ENCODE measurements at regions of chr19 and their contacts with region 1.

Region 1: GRCh38 chr19:4791170-4792018 is at the start of gene FEM1A:
- DNase-seq: peak; percentile 100
- ATAC-seq: peak; percentile 92
- H3K4me3 ChIP-seq: peak within 1 kb of the TSS; percentile 95
- H3K27ac ChIP-seq: peak within 1 kb of the TSS; percentile 81
- H3K4me1 ChIP-seq: peaks cover 29% of the 10 kb centered on the region
- H3K27me3 ChIP-seq: no peaks in the 10 kb centered on the region
- CTCF ChIP-seq: peak; percentile 99
- total RNA-seq, gene FEM1A: 28.1 and 30.6 TPM in 2 replicates

Region 2: GRCh38 chr19:4471403-4472173 is 319.8 kb before region 1 on chr19:
- CTCF ChIA-PET with region 1: interaction called, 14 read pairs
- POLR2A ChIA-PET with region 1: no interaction called
- intact Hi-C with region 1: no loop called
- DNase-seq: peak; percentile 100
- ATAC-seq: peak; percentile 89
- H3K4me3 ChIP-seq: peak overlapping the region; percentile 98
- H3K27ac ChIP-seq: peak overlapping the region; percentile 49
- H3K4me1 ChIP-seq: peaks cover 13% of the 10 kb centered on the region; the same call in 1 of the 2 replicates
- H3K27me3 ChIP-seq: no peaks in the 10 kb centered on the region
- CTCF ChIP-seq: no peak

Region 3: GRCh38 chr19:4676955-4677731 is 114.3 kb before region 1 on chr19:
- CTCF ChIA-PET with region 1: no interaction called
- POLR2A ChIA-PET with region 1: no interaction called
- intact Hi-C with region 1: no loop called
- DNase-seq: peak; percentile 53
- ATAC-seq: peak; percentile 19; the same call in 1 of the 2 replicates
- H3K4me3 ChIP-seq: no peak overlapping the region
- H3K27ac ChIP-seq: no peak overlapping the region
- H3K4me1 ChIP-seq: no peaks in the 10 kb centered on the region
- H3K27me3 ChIP-seq: no peaks in the 10 kb centered on the region
- CTCF ChIP-seq: peak; percentile 75

Region 4: DNA sequence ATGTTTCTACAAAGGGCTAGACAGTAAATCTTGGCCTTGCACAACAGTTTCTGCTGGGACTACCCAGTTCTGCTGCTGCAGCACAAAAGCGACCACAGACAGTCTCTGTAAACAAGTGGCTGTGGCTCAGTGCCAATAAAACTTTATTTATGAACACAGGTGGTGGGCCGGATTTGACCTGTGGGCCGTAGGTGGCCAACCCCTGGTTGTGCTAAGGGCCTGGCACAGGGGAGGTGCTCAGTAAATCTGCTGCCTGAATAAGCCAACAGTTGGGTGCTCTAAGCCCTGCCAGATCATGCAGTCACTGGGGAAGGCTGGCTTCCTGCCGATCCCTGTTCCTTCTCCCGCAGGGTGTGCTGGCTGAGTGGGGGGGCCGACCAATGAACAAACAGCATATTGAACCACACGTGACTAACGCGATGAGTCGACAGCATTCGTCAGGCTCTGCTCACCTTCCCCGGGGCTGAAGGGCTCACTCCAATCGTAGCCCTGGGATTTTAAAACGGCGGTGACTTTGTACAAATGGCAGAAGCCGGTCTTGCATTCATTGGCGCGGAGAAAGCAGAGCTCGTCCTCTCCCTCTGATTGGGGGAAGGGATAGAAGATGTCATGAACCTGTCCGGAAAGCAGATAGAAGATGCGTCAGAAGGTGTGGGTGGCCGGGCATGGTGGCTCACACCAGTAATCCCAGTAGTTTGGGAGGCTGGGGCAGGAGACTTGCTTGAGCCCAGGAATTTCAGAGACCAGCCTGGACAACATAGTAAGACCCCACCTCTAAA is 97.0 kb before region 1 on chr19:
- CTCF ChIA-PET with region 1: interaction called, 6 read pairs
- POLR2A ChIA-PET with region 1: no interaction called
- intact Hi-C with region 1: loop called (anchors 1 kb)
- DNase-seq: peak; percentile 100
- ATAC-seq: peak; percentile 85
- H3K4me3 ChIP-seq: peak overlapping the region; percentile 1; the same call in 1 of the 2 replicates
- H3K27ac ChIP-seq: peak overlapping the region; percentile 90
- H3K4me1 ChIP-seq: peaks cover 40% of the 10 kb centered on the region
- H3K27me3 ChIP-seq: no peaks in the 10 kb centered on the region
- CTCF ChIP-seq: no peak

Region 5: DNA sequence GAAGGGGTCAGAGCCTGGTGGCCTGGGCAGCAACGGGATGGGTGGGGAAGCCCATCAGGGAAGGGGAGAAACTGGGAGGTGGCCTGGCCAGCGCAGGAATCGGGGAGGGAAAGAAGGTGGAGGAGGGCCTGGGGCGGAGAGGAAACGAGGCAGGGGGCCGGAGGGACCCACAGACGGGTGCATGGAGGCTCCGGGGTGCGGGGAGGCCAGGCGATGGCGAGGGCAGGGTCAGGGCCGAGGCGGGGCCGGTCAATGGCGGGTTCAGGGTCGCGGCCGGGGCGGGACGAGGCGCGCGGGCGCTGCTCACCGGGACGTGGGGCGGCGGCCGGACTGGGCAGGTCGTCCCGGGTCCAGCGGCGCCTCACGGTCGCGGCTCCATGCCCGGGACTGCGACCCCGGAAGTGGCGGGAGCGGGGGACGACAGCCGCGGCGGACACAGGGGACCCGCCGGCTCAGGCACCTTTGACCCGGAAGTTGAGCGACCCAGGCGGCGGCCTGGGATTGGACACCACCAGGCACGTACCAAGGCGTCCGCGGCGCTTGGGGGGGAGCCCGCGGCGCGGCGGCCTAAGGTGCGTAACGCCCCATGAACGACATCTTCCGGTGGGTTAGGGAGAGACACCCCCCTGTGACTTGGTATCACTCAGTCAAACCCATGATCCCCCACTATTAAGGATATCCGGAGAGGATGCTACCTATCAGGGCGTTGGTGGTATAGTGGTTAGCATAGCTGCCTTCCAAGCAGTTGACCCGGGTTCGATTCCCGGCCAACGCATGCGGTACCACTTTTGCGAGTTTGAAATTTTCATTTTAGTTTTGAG is 67.8 kb before region 1 on chr19 and contains the start of gene DPP9:
- CTCF ChIA-PET with region 1: interaction called, 8 read pairs
- POLR2A ChIA-PET with region 1: no interaction called
- intact Hi-C with region 1: loop called (anchors 1 kb)
- DNase-seq: peak; percentile 100
- ATAC-seq: peak; percentile 87
- H3K4me3 ChIP-seq: peak within 1 kb of the TSS; percentile 99
- H3K27ac ChIP-seq: peak within 1 kb of the TSS; percentile 76
- H3K4me1 ChIP-seq: peaks cover 18% of the 10 kb centered on the region
- H3K27me3 ChIP-seq: no peaks in the 10 kb centered on the region
- CTCF ChIP-seq: peak; percentile 35; the same call in 1 of the 2 replicates
- total RNA-seq, gene DPP9: 129 and 215 TPM in 2 replicates

Region 6: GRCh38 chr19:4759388-4760284 is 31.8 kb before region 1 on chr19:
- CTCF ChIA-PET with region 1: no interaction called
- POLR2A ChIA-PET with region 1: interaction called, 26 read pairs
- intact Hi-C with region 1: no loop called
- DNase-seq: peak; percentile 79
- ATAC-seq: peak; percentile 98
- H3K4me3 ChIP-seq: peak overlapping the region; percentile 57; the same call in 1 of the 2 replicates
- H3K27ac ChIP-seq: no peak overlapping the region
- H3K4me1 ChIP-seq: peaks cover 6% of the 10 kb centered on the region
- H3K27me3 ChIP-seq: peaks cover 6% of the 10 kb centered on the region; the same call in 1 of the 2 replicates
- CTCF ChIP-seq: no peak

Region 7: GRCh38 chr19:4867534-4868285 is 76.3 kb after region 1 on chr19 and contains the start of gene PLIN3:
- CTCF ChIA-PET with region 1: interaction called, 12 read pairs
- POLR2A ChIA-PET with region 1: no interaction called
- intact Hi-C with region 1: no loop called
- DNase-seq: peak; percentile 95
- ATAC-seq: peak; percentile 74
- H3K4me3 ChIP-seq: peak within 1 kb of the TSS; percentile 80
- H3K27ac ChIP-seq: peak within 1 kb of the TSS; percentile 84
- H3K4me1 ChIP-seq: peaks cover 22% of the 10 kb centered on the region
- H3K27me3 ChIP-seq: no peaks in the 10 kb centered on the region
- CTCF ChIP-seq: no peak
- total RNA-seq, gene PLIN3: 136 and 159 TPM in 2 replicates

Region 8: GRCh38 chr19:4909156-4909896 is 117.9 kb after region 1 on chr19 and contains the start of gene UHRF1:
- CTCF ChIA-PET with region 1: no interaction called
- POLR2A ChIA-PET with region 1: no interaction called
- intact Hi-C with region 1: no loop called
- DNase-seq: peak; percentile 77
- ATAC-seq: peak; percentile 10
- H3K4me3 ChIP-seq: peak within 1 kb of the TSS; percentile 78
- H3K27ac ChIP-seq: peak within 1 kb of the TSS; percentile 81
- H3K4me1 ChIP-seq: peaks cover 42% of the 10 kb centered on the region
- H3K27me3 ChIP-seq: no peaks in the 10 kb centered on the region
- CTCF ChIP-seq: no peak
- total RNA-seq, gene UHRF1: 163 and 207 TPM in 2 replicates

Region 9: GRCh38 chr19:4968462-4969291 is 177.3 kb after region 1 on chr19 and contains the start of gene KDM4B:
- CTCF ChIA-PET with region 1: no interaction called
- POLR2A ChIA-PET with region 1: no interaction called
- intact Hi-C with region 1: no loop called
- DNase-seq: peak; percentile 100
- ATAC-seq: peak; percentile 86
- H3K4me3 ChIP-seq: peak within 1 kb of the TSS; percentile 84
- H3K27ac ChIP-seq: no peak within 1 kb of the TSS
- H3K4me1 ChIP-seq: peaks cover 33% of the 10 kb centered on the region
- H3K27me3 ChIP-seq: no peaks in the 10 kb centered on the region
- CTCF ChIP-seq: no peak
- total RNA-seq, gene KDM4B: 19.8 and 31.6 TPM in 2 replicates